Activated T-helper 1 cell treated with anti-CD3 and anti-CD28 coated beads, Interleukin-12 subunit alpha, Interleukin-12 subunit beta, Interleukin-2, Interleukin-4 antibody, amounts not matched to agents 30 ng/mL and 10 ng/mL and 1 ng/mL, durations not matched to agents 14 hours and 24 hours and 36 hours (primary cell): ENCODE measurements at regions of chr7 and their contacts with region 1.

Region 1: DNA sequence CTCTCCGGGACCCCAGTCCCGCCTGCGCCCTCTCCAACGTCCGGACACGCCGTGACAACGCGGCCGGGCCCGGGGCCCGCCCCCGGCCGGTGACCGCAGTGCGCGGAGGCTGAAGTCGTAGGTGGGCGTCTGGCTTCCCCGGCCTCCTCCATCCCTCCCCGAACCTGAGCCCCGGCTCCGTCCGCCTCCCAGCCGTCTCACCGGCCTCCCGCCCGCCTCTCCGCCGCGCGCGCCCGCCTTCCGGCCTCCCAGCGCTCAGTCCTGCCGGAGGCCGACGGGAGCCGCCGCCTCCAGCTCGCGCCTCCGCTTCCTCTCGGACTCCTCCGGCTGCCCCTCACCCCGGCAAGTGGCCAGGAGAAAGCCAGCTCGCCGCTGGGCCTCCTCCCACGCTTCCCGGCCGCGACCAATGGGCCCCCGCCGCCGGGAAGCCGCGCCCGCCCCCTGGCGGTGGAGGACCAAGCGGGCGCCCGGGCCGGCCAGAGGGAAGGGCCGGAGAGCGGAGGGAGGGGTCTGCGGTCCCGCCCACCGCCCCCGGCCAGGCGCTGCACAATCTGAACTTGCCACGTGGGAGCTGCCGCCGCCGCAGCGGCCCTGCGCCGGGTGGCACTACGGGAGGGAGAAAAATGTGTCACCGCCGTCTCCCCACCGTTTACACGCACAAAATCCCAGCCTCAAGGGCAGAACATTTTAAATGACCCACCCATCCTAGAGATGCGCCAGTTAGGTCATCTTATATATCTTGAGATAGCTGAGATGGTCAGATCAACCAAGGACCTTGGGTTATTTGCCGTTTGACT is at the start of gene FAM3C:
- DNase-seq: peak; percentile 83
- H3K4me3 Mint-ChIP-seq: peak within 1 kb of the TSS; percentile 88
- H3K27ac Mint-ChIP-seq: peak within 1 kb of the TSS; percentile 95
- H3K4me1 Mint-ChIP-seq: peaks cover 51% of the 10 kb centered on the region
- H3K27me3 Mint-ChIP-seq: no peaks in the 10 kb centered on the region
- total RNA-seq, gene FAM3C: 103 and 114 TPM in 2 replicates

Region 2: DNA sequence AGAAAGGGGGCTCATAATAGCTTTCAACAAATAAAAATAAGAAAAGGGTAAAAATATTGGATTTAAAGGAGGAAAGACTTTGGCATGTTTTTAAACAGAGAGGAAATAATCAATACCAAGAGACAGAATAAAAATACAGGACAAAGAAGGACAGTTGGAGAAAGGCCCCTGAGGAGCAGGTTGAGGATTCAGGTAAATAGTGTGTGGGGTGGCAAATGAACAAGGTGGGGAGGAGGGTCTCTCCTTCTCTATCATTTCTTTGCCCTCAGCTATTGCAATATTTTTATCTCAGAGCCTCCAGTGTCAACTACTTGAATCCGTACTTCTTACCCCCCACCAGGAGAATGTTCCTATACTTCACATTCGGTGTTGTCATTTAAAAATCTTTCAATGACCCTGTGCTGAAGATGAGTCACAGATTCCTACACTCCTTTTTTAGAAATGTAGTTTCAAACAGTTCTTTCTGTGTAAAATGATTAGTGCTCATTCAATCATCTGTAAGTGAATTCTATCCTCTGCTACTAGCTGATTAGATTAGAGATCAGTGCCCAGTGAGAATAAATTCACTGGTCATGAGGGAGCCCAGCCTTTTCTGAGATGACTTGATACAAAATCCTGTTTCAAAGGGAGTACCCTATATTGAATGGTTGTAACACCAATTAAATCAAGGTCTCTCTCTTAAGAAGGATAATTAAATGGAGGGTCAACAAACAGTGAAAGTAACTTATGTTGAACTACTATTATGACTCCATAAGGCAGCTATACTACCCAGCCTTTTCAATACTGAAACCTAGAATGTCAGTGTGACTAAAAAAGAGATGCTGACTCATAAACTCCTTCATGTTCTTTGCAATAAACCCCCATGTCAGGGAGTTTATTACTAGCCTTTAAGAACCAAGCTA is 117.8 kb before region 1 on chr7:
- intact Hi-C with region 1: loop called (anchors 1 kb)
- DNase-seq: no peak
- H3K4me3 Mint-ChIP-seq: no peak overlapping the region
- H3K27ac Mint-ChIP-seq: no peak overlapping the region
- H3K4me1 Mint-ChIP-seq: peaks cover 18% of the 10 kb centered on the region
- H3K27me3 Mint-ChIP-seq: peaks cover 8% of the 10 kb centered on the region

Region 3: DNA sequence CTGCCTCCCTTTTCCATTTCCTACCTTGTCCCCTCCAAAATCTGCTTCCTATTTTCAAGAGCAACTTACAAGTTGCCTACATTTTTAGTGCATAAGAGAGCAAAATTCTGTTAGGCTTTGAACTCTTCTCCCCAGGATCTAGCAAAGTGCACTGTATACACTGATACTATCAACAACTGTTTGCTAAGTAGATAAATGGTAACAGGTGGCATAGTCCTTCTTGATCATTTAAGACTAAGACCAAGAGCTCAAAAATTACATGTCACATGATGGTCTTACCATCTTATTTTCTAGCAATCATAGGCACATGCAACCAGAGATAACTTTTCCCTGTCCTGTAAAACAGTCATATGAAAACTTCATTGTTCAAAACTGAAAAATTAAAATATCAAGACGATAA is 16.2 kb before region 1 on chr7:
- intact Hi-C with region 1: loop called (anchors 1 kb)
- DNase-seq: no peak
- H3K4me3 Mint-ChIP-seq: no peak overlapping the region
- H3K27ac Mint-ChIP-seq: no peak overlapping the region
- H3K4me1 Mint-ChIP-seq: peaks cover 78% of the 10 kb centered on the region
- H3K27me3 Mint-ChIP-seq: no peaks in the 10 kb centered on the region

Region 4: GRCh38 chr7:121437456-121438127 is 41.4 kb after region 1 on chr7:
- intact Hi-C with region 1: loop called (anchors 1 kb)
- DNase-seq: no peak
- H3K4me3 Mint-ChIP-seq: peak overlapping the region; percentile 68
- H3K27ac Mint-ChIP-seq: peak overlapping the region; percentile 85
- H3K4me1 Mint-ChIP-seq: peaks cover 41% of the 10 kb centered on the region
- H3K27me3 Mint-ChIP-seq: no peaks in the 10 kb centered on the region

Region 5: GRCh38 chr7:121547544-121548092 is 151.5 kb after region 1 on chr7:
- intact Hi-C with region 1: loop called (anchors 1 kb)
- DNase-seq: no peak
- H3K4me3 Mint-ChIP-seq: no peak overlapping the region
- H3K27ac Mint-ChIP-seq: no peak overlapping the region
- H3K4me1 Mint-ChIP-seq: peaks cover 39% of the 10 kb centered on the region
- H3K27me3 Mint-ChIP-seq: peaks cover 9% of the 10 kb centered on the region

Region 6: DNA sequence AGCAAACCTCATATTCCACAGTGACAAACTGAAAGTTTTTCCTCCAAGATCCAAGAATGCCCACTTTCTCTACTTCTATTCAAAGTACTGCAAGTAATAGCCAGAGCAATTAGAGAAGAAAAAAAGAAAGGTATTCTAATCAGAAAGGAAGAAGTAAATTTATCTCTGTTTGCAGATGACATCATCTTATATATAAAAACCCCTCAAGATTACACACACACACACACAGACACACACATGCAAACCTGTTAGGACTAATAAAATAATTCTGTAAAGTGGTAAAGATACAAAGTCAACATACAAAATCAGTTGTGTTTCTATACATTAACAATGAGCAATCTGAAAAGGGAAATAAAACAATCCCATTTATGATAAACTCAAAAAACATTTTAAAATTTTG is 792.6 kb after region 1 on chr7:
- intact Hi-C with region 1: no loop called
- DNase-seq: no peak
- H3K4me3 Mint-ChIP-seq: no peak overlapping the region
- H3K27ac Mint-ChIP-seq: no peak overlapping the region
- H3K4me1 Mint-ChIP-seq: no peaks in the 10 kb centered on the region
- H3K27me3 Mint-ChIP-seq: peaks cover 2% of the 10 kb centered on the region